IMR-90 (cell line): ENCODE measurements at regions of chr13 and their contacts with region 1.

Region 1: DNA sequence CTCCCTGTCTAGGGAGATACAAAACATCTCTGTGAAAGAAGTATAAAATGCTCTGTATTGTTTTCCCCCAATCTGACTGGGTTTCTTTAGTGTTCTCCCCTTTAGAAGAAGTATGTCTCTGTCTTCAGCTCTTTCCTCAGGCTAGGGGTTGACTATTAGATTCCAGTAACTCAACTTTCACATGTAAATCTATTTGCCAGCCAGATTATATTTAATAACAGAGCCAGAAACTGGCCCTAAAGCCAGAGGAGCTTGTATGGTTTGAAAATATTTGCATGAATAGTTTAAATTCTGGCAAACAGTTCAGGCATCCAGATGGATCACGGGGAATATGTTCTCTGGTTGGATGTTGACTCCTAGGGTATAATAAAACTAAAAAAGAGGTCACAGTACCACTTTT is 22.3 kb upstream of the CYSLTR2 start:
- DNase-seq: no peak
- ATAC-seq: peak; percentile 27; the same call in 1 of the 2 replicates
- H3K4me3 ChIP-seq: no peak overlapping the region
- H3K27ac ChIP-seq: no peak overlapping the region
- H3K4me1 ChIP-seq: no peaks in the 10 kb centered on the region; the same call in 1 of the 2 replicates
- H3K27me3 ChIP-seq: no peaks in the 10 kb centered on the region
- CTCF ChIP-seq: no peak
- POLR2A ChIP-seq: no peak
- RAD21 ChIP-seq: no peak

Region 2: DNA sequence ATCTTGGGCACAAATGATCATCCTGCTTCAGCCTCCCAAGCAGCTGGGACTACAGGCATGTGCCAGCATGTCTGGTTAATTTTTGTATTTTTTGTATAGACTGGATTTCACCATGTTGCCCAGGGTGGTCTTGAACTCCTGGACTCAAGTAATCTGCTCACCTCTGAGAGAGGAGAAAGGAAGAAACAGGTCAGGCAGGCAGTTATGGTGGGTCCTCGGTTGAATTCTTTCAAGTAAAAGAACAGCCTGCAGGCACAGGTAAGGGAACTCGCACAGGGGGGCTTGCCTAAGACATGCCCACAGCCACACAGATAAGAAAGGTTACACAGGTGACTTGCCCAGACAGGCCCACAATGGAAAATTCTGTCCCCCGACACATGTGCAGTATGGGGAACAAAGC is 12.5 kb before region 1 on chr13:
- CTCF ChIA-PET with region 1: no interaction called
- POLR2A ChIA-PET with region 1: interaction called, 13 read pairs
- dilution Hi-C with region 1: no loop called
- in situ Hi-C with region 1: no loop called
- intact Hi-C with region 1: no loop called
- DNase-seq: no peak
- ATAC-seq: no peak
- H3K4me3 ChIP-seq: no peak overlapping the region
- H3K27ac ChIP-seq: no peak overlapping the region
- H3K4me1 ChIP-seq: no peaks in the 10 kb centered on the region
- H3K27me3 ChIP-seq: peaks cover 6% of the 10 kb centered on the region
- CTCF ChIP-seq: no peak
- POLR2A ChIP-seq: no peak
- RAD21 ChIP-seq: no peak

Region 3: GRCh38 chr13:48647630-48648029 is 16.2 kb after region 1 on chr13:
- CTCF ChIA-PET with region 1: no interaction called
- POLR2A ChIA-PET with region 1: no interaction called
- dilution Hi-C with region 1: no loop called
- in situ Hi-C with region 1: no loop called
- intact Hi-C with region 1: no loop called
- DNase-seq: no peak
- ATAC-seq: no peak
- H3K4me3 ChIP-seq: no peak overlapping the region
- H3K27ac ChIP-seq: no peak overlapping the region
- H3K4me1 ChIP-seq: no peaks in the 10 kb centered on the region
- H3K27me3 ChIP-seq: peaks cover 13% of the 10 kb centered on the region
- CTCF ChIP-seq: no peak
- POLR2A ChIP-seq: no peak
- RAD21 ChIP-seq: no peak

Region 4: DNA sequence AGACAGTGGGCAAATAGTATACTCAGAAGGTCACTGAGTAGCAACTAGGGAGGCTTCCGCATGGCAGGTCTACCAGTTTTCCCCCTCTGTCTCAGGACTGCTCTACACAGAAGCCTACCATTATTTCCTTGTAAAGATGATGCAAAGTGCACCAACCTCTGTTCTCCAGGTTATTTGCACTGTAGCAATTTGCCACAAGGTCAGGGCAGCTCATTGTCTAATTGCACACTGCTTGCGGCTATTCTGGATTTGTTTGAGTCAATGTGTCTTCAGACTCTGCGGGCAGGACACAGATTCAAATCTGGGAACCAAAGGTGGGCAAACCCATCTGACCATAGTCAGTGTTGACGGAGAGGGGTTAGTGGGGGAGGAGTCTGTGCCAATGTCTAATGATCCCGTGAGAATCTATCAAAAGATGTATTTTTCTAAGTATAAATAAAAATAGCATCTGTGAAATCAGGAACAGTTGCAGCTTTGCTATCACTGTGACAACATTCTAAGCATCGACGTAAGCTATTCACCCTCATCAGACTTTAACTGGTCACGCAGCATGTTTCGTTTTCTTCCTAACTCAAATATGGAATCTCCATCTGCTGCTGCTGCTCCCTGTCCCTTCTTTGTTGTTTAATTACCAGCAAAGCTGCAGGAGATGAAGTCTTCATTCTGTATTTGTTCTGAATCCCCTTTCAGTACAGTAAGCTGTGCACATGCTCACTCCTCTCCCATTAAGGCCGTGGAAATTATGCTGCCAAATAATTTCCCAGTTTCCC is 48.7 kb after region 1 on chr13:
- CTCF ChIA-PET with region 1: no interaction called
- POLR2A ChIA-PET with region 1: no interaction called
- dilution Hi-C with region 1: no loop called
- in situ Hi-C with region 1: no loop called
- intact Hi-C with region 1: no loop called
- DNase-seq: no peak
- ATAC-seq: no peak
- H3K4me3 ChIP-seq: no peak overlapping the region
- H3K27ac ChIP-seq: no peak overlapping the region
- H3K4me1 ChIP-seq: no peaks in the 10 kb centered on the region
- H3K27me3 ChIP-seq: peaks cover 21% of the 10 kb centered on the region
- CTCF ChIP-seq: no peak
- POLR2A ChIP-seq: no peak
- RAD21 ChIP-seq: no peak